ENCODE measurements at regions of chr3 and their contacts with region 1.

Region 1: DNA sequence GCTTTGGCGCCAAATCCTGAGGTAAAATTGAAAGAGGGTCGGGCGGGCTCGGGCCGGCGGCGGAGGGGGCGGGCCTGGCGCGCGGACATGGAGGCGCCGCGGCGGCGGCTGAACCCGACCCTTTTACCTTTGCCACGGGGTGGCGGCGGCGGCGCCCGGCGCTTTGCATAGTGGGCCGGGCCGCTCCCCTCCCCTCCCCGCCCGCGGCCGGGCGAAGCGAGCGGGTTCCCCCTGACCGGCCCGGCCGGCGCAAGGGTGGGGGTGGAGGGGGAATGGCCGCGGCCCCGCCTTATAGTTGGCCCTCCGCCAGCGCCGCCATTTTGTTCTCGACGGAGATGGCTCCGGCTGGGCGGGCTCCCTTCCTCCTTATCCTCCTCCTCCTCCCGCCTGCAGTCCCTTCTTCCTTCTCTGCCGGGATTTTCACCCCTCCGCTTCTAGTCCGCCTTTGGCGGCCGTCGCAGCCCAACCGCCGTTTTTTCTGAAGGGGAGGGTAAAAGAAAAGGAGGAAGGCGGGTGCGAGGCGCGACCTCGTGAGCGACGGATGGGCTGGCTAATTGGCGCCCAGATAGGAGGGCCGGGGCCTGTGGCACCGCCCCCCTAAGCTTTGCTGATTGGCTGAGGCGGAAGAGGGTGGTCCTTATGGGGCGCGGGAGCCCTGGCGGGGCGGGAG is 638 bp downstream of the NR2C2 start:
- DNase-seq: peak; percentile 96
- ATAC-seq: peak; percentile 88
- H3K4me3 Mint-ChIP-seq: peak overlapping the region; percentile 99
- H3K27ac Mint-ChIP-seq: peak overlapping the region; percentile 100
- H3K4me1 Mint-ChIP-seq: peaks cover 55% of the 10 kb centered on the region
- H3K27me3 Mint-ChIP-seq: no peaks in the 10 kb centered on the region
- CTCF ChIP-seq: no peak

Region 2: GRCh38 chr3:14402304-14402811 is 545.7 kb before region 1 on chr3 and contains the start of gene SLC6A6:
- CTCF ChIA-PET with region 1: no interaction called
- POLR2A ChIA-PET with region 1: no interaction called
- intact Hi-C with region 1: loop called (anchors 2 kb)
- DNase-seq: peak; percentile 91
- ATAC-seq: peak; percentile 80
- H3K4me3 Mint-ChIP-seq: peak within 1 kb of the TSS; percentile 94
- H3K27ac Mint-ChIP-seq: peak within 1 kb of the TSS; percentile 95
- H3K4me1 Mint-ChIP-seq: peaks cover 62% of the 10 kb centered on the region
- H3K27me3 Mint-ChIP-seq: no peaks in the 10 kb centered on the region
- CTCF ChIP-seq: no peak
- total RNA-seq, gene SLC6A6: 67.2 and 67.3 TPM in 2 replicates

Region 3: DNA sequence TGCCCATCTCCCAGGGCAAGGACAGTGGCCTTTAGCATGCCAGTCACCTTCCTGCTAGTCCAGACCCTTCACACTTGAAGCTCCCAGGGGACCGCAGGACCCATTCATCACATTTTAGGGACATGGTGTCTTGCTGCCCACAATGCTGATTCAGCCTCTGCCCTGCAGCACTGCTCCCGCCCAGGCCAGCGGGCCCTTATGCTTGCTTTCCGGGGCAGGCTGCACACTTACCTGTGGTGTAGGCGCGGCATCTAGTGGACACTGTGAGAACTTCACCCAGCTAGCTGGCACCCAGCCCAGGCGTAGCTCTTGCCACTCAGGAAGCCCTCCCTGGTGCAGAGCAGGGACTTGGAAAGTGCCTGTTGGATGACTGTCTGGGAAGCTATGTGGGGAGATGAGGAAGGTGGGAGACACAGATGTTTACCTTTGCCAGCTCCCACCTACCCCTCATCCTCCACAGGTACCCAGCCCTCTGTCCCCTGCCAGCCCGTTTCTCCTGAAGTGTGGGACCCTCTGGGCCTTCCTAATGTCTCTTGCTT is 26.9 kb before region 1 on chr3:
- CTCF ChIA-PET with region 1: interaction called, 3 read pairs
- POLR2A ChIA-PET with region 1: interaction called, 3 read pairs
- intact Hi-C with region 1: loop called (anchors 1 kb)
- DNase-seq: peak; percentile 72
- ATAC-seq: peak; percentile 98
- H3K4me3 Mint-ChIP-seq: no peak overlapping the region
- H3K27ac Mint-ChIP-seq: no peak overlapping the region
- H3K4me1 Mint-ChIP-seq: no peaks in the 10 kb centered on the region
- H3K27me3 Mint-ChIP-seq: peaks cover 5% of the 10 kb centered on the region
- CTCF ChIP-seq: peak; percentile 40

Region 4: DNA sequence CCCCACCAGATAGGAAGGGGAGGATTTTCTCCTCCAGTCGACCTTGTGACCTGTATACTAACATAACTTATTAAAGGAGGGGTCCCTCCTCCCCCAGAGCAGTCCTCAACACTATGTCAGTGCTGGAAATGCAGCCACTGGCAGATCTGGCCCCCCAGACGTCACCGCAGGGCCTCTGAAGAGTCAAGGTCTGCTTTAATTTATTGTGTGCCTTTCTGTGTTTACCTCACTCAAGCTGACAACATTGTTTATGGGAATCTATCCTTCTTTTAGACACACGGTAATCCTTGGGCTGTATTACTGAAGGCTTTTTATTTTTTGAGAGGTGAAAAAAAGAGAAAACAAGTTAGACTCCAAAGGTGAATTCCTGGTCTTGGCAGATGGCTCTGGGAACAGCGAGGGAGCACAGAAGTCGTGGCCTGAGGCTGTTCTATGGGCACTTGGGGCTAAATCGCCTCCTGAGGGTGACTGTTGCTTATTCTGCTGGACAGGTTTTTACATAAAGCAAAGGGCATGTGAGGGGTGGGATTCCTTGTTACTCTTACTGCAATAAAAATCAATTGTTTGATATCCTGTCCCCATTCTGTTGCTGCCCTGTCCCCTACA is 14.1 kb before region 1 on chr3:
- CTCF ChIA-PET with region 1: no interaction called
- POLR2A ChIA-PET with region 1: no interaction called
- intact Hi-C with region 1: no loop called
- DNase-seq: no peak
- ATAC-seq: no peak
- H3K4me3 Mint-ChIP-seq: no peak overlapping the region
- H3K27ac Mint-ChIP-seq: no peak overlapping the region
- H3K4me1 Mint-ChIP-seq: no peaks in the 10 kb centered on the region
- H3K27me3 Mint-ChIP-seq: no peaks in the 10 kb centered on the region
- CTCF ChIP-seq: no peak

Region 5: GRCh38 chr3:15051531-15051930 is 103.5 kb after region 1 on chr3:
- CTCF ChIA-PET with region 1: interaction called, 3 read pairs
- POLR2A ChIA-PET with region 1: interaction called, 6 read pairs
- intact Hi-C with region 1: loop called (anchors 1 kb)
- DNase-seq: no peak
- ATAC-seq: peak; percentile 20
- H3K4me3 Mint-ChIP-seq: no peak overlapping the region
- H3K27ac Mint-ChIP-seq: peak overlapping the region; percentile 84
- H3K4me1 Mint-ChIP-seq: peaks cover 68% of the 10 kb centered on the region
- H3K27me3 Mint-ChIP-seq: no peaks in the 10 kb centered on the region
- CTCF ChIP-seq: no peak

Region 6: DNA sequence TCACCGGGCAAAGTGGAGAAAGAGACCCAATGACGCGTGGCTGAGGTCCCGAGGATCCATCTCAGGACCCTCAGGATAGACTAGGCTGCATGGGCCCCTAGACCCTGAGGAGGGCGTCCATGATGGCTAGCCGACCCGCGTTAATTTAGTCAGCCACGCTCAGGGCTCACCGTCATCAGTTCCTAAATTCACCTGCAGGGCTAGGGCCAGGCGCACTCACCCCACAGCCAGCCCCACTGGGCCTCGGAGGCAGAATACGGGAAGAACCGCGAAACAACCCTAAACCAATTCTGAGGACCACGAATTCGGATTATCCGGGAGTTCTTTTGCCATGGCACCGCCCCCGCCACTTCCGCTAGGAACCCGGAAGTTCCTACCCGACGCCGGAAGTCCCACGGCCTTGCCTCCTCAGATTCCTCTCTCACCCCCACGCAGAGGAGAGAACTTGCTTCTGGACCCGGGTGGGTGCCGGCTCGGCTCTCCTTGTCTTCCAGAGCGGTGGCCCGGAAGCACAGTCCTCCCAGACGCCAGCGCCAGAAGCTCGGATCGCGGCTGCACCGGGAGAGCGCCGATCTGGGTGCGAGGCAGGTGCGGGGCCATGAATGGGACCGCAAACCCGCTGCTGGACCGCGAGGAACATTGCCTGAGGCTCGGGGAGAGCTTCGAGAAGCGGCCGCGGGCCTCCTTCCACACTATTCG is 479.3 kb after region 1 on chr3 and contains the starts of genes EAF1 and METTL6:
- CTCF ChIA-PET with region 1: no interaction called
- POLR2A ChIA-PET with region 1: no interaction called
- intact Hi-C with region 1: loop called (anchors 5 kb)
- DNase-seq: peak; percentile 76
- ATAC-seq: peak; percentile 92
- H3K4me3 Mint-ChIP-seq: peak within 1 kb of the TSS; percentile 96
- H3K27ac Mint-ChIP-seq: peak within 1 kb of the TSS; percentile 95
- H3K4me1 Mint-ChIP-seq: peaks cover 50% of the 10 kb centered on the region
- H3K27me3 Mint-ChIP-seq: no peaks in the 10 kb centered on the region
- CTCF ChIP-seq: no peak
- total RNA-seq, gene EAF1: 19.2 and 19.7 TPM in 2 replicates
- total RNA-seq, gene METTL6: 18.7 and 20.2 TPM in 2 replicates

Region 7: DNA sequence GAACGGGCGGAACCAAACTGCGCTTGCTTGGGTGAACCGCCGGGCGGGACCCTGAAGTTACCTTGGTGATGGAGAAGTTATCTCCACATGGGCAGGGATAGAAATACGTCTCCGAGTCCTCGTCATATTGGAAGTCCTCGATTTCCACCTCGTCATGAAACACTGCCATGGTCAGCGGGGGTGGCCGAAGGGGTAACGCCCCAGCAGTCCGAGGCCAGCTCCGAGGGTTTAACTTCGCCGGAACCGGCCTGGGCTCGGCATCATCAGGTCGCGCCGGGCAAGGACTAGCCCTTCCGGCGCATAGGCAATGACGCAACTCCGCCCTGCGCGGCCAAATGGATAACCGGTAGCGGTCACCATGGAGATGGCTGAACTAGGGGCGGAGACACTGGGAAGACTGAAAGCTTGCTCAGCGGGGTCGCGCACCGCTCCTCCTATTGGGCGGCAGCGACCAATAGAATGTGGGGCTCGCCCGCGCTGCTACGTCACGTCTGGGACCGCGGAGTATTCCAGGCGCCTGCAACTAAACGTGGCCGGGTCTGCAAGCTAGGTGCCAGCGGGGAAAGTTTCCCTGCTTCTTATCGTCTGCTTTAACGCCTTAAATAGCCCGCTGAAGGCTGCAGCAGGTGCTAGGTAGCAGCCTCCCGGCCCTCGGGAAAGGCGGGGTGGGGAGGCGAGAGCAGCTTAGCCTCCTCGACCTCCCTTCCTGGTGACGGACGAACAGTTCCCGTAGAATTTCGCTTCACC is 1316.9 kb after region 1 on chr3 and contains the starts of genes DPH3 and OXNAD1:
- CTCF ChIA-PET with region 1: no interaction called
- POLR2A ChIA-PET with region 1: no interaction called
- intact Hi-C with region 1: loop called (anchors 2 kb)
- DNase-seq: peak; percentile 99
- ATAC-seq: peak; percentile 96
- H3K4me3 Mint-ChIP-seq: peak within 1 kb of the TSS; percentile 100
- H3K27ac Mint-ChIP-seq: peak within 1 kb of the TSS; percentile 100
- H3K4me1 Mint-ChIP-seq: peaks cover 25% of the 10 kb centered on the region
- H3K27me3 Mint-ChIP-seq: no peaks in the 10 kb centered on the region
- CTCF ChIP-seq: no peak
- total RNA-seq, gene DPH3: 13.4 and 14.7 TPM in 2 replicates
- total RNA-seq, gene OXNAD1: 5.5 and 8.7 TPM in 2 replicates